Ascending aorta (tissue), 2 donors: ENCODE measurements at regions of chr20 and their contacts with region 1.

Region 1: GRCh38 chr20:330233-331149 is 5.1 kb downstream of the SOX12 start:
- DNase-seq: peak in 1 of 2 donors; percentile 76
- H3K4me3 ChIP-seq: no peak overlapping the region
- H3K27ac ChIP-seq: no peak overlapping the region
- H3K4me1 ChIP-seq: peaks cover 0 to 5% of the 10 kb centered on the region in 2 donors
- H3K27me3 ChIP-seq: no peaks in the 10 kb centered on the region
- CTCF ChIP-seq: peak; percentile 76 to 86 (median 85)

Region 2: GRCh38 chr20:208942-209566 is 121.4 kb before region 1 on chr20:
- intact Hi-C with region 1: loop called (anchors 2 kb)
- DNase-seq: no peak
- H3K4me3 ChIP-seq: no peak overlapping the region
- H3K27ac ChIP-seq: no peak overlapping the region
- H3K4me1 ChIP-seq: no peaks in the 10 kb centered on the region
- H3K27me3 ChIP-seq: no peaks in the 10 kb centered on the region
- CTCF ChIP-seq: peak; percentile 13 to 46 (median 18)

Region 3: DNA sequence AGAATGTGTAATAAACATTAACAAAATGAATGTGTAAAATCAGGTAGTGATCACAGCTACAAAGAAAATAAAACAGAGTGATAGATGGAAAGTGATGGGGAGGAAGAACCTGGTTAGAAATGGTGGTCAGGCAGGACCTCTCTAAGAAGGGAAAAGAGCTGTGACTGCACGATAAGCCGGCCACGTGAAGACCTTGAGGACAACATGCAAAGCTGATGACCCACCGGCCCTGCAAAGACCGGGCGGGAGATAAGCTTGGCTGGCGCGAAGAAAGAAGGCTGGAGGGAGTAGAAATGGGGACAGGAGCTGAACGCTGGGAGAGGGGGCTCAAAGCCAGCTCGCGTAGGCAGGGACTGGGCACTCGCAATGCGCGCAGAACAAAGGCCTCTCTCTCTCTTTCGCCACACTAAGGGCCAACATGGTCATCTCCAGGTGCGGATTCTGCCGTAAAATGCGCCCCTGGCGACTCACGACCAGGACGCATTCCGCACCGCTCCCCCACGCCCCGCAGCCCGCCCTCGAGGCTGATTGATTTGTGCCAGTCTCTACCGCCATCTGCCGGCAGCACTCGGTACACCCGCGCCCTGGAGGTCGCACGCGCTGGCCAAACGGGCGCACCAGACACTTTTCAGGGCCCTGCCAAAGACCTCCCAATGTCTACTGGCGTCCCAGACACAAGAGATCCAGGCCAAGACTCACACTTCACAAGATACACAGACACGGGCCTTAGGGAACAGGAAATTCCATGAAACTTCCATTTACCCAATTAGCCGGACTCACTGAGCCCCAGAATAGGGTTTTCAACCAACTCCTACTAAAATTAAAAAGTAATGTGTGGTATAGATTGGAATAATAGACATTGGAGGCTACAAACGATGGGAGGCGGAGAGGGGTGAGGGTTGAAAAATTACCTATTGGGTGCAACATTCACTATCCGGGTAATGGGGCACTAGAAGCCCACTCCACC is 63.6 kb before region 1 on chr20:
- intact Hi-C with region 1: loop called (anchors 1 kb)
- DNase-seq: peak; percentile 29 to 91
- H3K4me3 ChIP-seq: peak overlapping the region; percentile 52 to 69
- H3K27ac ChIP-seq: no peak overlapping the region
- H3K4me1 ChIP-seq: no peaks in the 10 kb centered on the region
- H3K27me3 ChIP-seq: no peaks in the 10 kb centered on the region
- CTCF ChIP-seq: peak; percentile 89 to 97 (median 94)